ENCODE measurements at regions of chr16 and their contacts with region 1.

Region 1: GRCh38 chr16:81035398-81035974 is at the start of gene ATMIN:
- DNase-seq: peak; percentile 92
- total RNA-seq, gene ATMIN: 26.0 TPM

Region 2: DNA sequence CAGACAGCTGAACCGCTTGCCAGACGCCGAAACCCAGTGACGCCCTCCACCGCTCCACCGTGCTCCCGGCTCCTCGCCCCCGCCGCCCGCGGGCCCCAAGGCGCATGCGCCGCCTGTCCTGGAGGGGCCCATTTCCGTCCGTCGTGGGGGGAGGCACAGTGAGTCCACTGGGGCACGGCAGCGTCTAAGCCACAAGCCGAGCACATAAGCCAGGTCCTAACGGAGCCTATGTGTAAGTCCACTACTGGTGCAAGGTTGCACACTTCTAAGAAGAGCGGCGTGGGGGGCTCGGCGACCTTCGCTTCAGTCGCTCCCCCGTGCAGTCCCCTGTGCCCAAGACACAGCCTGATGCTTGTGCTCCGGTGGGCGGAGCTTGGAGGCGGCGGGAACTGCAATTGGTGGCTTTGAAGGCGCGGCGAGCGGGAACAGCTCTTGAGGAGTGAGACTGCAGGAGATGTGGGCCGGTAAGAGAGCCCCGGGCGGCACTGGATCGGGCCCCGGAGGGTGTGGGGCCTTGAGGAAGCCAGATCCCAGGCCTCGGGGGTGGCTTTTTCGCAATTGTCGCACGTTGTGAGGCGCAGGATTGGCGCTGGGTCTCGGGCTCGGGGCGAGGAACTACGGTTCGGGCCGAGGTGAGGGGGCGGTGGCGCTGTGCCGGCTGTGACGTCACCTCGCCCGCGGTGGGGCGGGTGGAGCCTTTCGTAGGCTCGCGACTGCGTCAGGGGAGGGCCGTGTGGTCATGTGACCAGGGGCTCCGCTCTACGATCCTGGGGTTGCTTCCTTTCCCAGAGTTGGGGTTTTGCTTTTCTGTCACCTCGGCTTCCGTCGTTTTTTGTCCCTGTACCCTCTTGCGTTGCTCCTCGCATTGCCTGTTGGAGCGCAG is 28.4 kb before region 1 on chr16 and contains the starts of genes CENPN and CMC2:
- intact Hi-C with region 1: loop called (anchors 1 kb)
- DNase-seq: peak; percentile 99
- total RNA-seq, gene CENPN: 10.0 TPM
- total RNA-seq, gene CMC2: 112 TPM

Region 3: DNA sequence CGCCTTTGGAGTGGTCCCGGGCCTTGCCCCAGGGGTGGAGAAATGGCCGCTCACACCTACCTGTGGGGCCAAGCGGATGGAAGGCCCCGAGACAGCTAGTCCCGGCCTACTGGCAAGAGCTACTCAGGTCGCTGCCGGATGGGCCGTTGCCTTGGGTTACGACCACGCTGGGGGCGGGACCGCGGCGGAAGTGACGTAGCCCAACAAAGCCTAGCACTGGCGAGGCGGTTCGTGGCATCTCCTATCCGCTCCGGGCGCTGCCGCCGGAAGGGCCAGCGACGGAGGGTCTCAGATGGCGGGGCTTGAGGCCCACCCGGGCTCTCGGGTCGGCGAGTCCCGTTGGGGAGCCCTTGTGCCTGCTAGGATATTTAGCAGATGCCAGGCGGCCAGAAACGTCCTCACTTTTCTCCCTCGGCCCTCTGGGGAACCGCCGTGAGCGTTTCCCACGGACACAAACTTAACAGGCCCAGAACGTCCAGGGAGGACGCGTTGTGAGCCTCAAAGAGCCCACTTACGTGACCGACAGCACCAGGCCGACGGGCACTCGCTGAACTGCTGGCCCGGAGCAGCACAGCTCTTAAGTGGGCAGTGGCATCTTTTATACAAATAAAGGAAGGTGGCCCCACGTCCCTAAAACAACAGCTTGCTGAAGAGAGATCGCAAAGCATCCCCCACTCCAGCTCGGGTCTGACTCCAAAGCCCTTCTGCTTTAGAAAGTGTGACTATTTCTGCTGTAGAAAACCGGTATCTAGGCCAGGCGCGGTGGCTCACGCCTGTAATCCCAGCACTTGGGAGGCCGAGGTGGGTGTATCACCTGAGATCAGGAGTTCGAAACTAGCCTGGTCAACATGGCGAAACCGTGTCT is 41.8 kb after region 1 on chr16 and contains the start of gene C16orf46:
- intact Hi-C with region 1: loop called (anchors 2 kb)
- DNase-seq: peak; percentile 99
- total RNA-seq, gene C16orf46: 1.5 TPM

Region 4: DNA sequence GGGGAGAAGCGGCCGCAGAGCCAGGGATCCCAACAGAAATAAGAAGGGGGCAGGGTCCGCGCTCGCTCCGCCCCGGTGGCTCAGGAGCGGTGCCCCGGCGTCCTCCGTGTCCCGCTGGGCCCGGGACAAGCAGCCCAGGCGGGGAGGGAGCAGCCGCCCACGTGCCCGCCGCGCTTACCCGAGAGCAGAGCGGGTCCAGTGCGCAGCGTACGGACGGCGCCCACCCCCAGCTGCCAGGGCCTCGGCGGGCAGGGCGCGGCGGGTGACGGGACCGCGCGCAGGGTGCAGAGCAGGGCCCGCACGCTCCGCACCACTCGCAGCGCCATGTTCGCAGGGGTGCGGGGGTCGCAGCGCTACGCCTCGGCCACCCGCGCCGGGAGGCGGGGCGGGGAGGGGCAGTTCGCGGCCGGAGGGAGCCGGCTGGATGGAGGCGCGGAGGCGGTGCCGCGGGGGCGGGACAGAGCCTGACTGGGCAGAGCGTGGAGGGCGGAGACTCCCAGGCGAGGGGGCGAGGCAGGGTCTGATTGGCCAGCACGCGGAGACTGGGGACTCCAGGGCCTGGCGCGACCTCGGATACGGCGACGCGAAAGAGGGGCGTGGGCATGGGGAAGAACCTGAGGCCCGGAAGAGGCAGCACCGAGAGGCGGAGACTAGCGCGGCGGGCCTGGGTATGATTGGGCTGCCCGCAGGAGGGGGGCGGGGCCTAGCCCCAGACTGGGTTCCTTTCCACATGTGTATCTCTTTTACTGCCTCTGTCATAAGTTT is 60.6 kb after region 1 on chr16 and contains the start of gene GCSH:
- intact Hi-C with region 1: loop called (anchors 5 kb)
- DNase-seq: peak; percentile 100
- total RNA-seq, gene GCSH: 35.2 TPM

Region 5: DNA sequence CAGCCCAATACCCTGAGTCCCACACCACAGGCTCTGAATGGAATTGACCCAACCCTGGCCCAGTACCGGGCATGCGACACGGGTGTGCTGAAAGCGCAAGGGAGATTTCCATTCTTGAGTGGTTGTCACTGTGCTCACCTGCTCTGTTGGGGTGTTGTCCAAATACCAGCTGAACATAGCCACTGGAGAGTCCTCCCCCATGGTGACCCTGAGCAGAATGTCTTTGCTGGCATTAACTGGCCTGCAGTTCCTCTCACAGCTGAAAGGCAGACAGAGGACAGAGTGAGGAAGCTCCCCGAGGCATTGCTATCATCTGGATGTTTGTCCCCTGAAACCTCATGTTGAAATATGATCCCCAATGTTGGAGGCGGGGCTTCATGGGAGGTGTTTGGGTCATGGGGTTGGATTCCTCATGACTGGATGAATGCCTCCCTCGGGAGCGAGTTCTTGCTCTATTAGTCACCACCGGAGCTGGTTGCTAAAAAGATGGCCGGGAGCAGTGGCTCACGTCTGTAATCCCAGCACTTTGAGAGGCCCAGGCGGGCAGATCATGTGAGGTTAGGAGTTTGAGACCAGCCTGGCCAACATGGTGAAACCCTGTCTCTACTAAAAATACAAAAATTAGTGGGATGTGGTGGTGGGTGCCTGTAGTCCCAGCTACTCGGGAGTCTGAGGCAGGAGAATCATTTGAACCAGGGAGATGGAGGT is 145.7 kb after region 1 on chr16:
- intact Hi-C with region 1: loop called (anchors 5 kb)
- DNase-seq: peak; percentile 84

Measured in cardiac septum (tissue), 1 donor.